ENCODE measurements at regions of chr3 and their contacts with region 1.

Region 1: DNA sequence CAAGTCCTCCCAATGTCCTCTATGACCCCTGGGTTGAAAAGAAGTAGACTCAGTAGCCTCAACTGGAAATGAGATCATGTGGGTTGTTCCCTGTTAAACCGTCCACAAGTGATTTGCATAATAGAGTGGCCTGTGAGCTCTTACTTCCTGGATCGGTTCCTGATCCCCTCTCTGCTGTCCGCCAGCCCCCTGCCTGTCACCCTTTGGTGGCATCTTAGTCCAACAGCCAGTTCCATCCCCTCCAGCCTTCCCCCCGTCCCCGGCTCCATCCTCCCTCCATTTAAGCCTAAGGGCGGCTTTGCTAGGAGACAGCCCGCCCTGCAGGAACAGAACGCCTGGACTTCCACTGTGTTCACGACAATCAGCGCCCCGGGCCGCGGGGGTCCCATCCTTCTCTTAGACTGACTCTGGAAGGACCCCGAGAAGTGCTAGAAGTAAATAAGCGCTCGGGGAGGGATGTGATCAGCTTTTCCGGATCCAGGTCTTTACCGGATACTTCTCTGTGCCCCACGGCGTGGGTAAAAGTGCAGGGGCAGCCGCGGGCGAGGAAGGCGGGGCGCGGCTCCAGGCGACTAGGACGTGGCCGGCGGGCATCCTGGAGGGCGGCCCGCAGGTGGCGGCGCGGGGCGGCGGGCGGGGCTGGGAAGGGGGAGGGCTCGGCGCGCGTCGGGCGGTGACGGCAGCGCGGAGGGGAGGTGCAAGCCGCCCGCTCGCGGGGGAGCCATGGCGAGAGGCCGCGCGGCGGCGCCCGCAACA is 51.2 kb upstream of the ULK4 start:
- DNase-seq: peak; percentile 77
- H3K4me3 Mint-ChIP-seq: peak overlapping the region; percentile 86
- H3K27ac Mint-ChIP-seq: peak overlapping the region; percentile 87
- H3K4me1 Mint-ChIP-seq: peaks cover 47% of the 10 kb centered on the region
- H3K27me3 Mint-ChIP-seq: no peaks in the 10 kb centered on the region

Region 2: GRCh38 chr3:40524568-40525285 is 1488.4 kb before region 1 on chr3 and contains the start of gene ZNF621:
- CTCF ChIA-PET with region 1: no interaction called
- intact Hi-C with region 1: loop called (anchors 10 kb)
- DNase-seq: peak; percentile 82
- H3K4me3 Mint-ChIP-seq: peak within 1 kb of the TSS; percentile 92
- H3K27ac Mint-ChIP-seq: peak within 1 kb of the TSS; percentile 85
- H3K4me1 Mint-ChIP-seq: peaks cover 11% of the 10 kb centered on the region
- H3K27me3 Mint-ChIP-seq: no peaks in the 10 kb centered on the region
- total RNA-seq, gene ZNF621: 16.4 to 17.7 TPM

Region 3: GRCh38 chr3:41608347-41608746 is 404.8 kb before region 1 on chr3:
- CTCF ChIA-PET with region 1: no interaction called
- intact Hi-C with region 1: loop called (anchors 2 kb)
- DNase-seq: no peak
- H3K4me3 Mint-ChIP-seq: no peak overlapping the region
- H3K27ac Mint-ChIP-seq: peak overlapping the region; percentile 52
- H3K4me1 Mint-ChIP-seq: peaks cover 12% of the 10 kb centered on the region
- H3K27me3 Mint-ChIP-seq: no peaks in the 10 kb centered on the region

Region 4: DNA sequence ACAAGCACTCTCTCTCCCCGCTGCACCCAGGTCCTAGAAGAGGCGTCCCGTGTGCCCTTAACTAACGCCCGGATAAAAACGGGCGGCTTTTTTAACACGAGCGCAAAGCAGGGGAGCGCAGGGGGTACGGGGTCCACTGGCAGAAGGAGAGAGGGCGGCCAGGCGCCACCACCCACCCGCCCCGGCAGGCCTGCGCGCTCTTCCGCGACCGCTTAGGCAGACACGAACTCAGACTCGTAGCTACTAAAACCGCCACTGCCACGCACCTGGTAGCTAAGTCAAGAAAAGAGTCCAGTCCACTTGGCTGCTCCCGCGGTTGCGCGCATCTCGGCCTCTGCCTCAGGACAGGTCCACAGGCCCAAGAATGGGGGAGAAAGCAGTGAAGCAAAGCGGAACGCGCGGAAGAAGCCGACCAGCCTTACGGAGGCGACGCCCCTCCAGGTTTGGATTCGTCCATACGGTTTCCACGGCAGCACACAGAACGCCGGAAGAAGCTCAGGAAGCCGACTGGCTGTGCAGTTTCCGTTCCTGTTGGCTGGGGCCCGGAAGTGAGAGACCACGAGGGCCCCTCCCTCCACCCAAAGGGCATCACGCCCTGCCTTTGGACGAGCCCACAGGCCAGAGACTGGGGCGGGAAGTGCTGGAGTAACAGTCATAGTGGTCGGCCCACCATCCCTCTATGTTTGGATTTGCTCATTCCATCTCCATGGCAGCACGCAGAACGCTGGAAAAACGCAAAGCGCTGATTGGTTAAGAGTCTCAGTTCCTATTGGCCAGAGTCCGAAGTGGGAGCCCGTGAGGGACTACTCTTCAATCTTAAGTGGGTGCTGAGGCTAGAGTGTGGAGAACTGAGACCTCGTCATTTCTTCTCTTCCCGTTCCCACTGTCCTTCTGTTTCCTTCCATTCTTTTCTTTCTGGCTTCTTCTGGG is 51.1 kb before region 1 on chr3 and contains the start of gene ULK4:
- CTCF ChIA-PET with region 1: no interaction called
- intact Hi-C with region 1: loop called (anchors 1 kb)
- DNase-seq: peak; percentile 97
- H3K4me3 Mint-ChIP-seq: peak within 1 kb of the TSS; percentile 99
- H3K27ac Mint-ChIP-seq: peak within 1 kb of the TSS; percentile 87
- H3K4me1 Mint-ChIP-seq: peaks cover 13% of the 10 kb centered on the region
- H3K27me3 Mint-ChIP-seq: no peaks in the 10 kb centered on the region
- total RNA-seq, gene ULK4: 8.5 to 9.1 TPM

Region 5: DNA sequence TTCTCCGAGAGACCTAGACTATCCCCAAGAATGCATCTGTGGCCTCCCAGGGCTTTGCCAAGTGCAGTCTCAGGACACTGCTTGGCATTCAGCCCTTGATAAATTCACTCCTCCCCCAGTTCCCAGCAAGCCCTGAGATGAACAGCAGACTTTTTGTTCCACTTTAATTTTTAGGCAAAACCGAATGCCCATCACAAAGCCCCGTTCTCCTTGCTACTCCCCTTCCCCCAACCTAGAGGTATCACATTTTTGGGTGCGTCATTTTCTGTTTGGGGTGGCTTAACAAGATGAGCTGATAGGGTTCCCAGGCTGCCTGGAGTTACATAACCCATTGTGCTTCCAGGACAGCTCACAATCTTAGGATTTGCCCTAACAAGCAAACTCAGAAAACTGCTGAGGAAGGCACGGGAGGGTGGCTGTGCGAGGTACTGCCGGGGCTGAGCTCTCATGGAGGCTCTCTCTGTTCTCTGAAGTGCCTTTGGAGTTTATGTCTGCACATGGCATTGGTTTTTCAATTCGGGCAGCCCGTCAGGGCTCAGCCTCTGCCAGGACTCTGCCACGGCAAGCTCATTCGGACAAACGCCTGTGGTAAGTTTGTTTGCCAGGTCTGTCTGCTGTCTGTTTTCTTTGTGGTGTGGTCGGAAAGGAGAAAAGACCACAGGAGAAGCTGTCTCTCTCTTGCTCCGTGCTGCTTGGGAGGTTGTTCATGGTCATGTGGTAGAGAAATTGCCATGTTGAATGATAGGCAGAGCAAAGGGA is 78.0 kb after region 1 on chr3 and contains the start of gene TRAK1:
- CTCF ChIA-PET with region 1: no interaction called
- intact Hi-C with region 1: loop called (anchors 1 kb)
- DNase-seq: no peak
- H3K4me3 Mint-ChIP-seq: no peak within 1 kb of the TSS
- H3K27ac Mint-ChIP-seq: no peak within 1 kb of the TSS
- H3K4me1 Mint-ChIP-seq: peaks cover 51% of the 10 kb centered on the region
- H3K27me3 Mint-ChIP-seq: no peaks in the 10 kb centered on the region
- total RNA-seq, gene TRAK1: 18.3 to 19.1 TPM

Region 6: DNA sequence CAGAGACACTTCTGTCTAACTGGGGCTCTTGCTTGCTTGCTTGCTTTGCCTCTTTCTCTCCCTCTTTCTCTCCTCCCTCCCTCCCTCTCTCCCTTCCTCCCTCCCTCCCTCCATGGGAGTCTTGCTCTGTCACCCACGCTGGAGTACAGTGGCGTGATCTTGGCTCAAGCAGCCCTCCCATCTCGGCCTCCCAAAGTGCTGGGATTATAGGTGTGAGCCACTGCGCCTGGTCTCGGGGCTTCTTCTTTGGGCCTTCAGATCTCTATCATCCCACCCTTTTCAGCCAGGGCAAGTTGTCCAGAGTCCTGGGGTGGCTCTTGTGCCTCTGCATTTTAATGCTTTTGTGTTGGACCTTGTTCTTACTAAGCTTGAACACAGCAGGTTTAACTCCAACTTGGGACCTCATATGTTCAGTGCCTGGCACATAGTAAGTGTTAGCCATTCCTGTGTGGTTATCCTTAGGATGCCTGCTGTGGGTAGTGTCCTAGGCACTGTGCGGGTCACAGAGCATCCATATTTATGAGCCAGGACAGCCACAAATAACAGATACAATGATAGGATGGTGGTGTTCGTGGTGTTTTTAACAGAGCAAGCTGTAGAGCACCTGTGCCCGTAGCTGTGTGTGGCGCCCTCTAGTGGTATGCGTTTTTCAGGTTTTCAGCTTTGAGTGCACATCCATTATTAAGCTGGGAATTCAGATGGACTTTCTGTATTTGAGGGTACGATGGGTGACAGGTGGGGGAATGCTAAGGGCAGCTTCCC is 177.8 kb after region 1 on chr3:
- CTCF ChIA-PET with region 1: no interaction called
- intact Hi-C with region 1: loop called (anchors 10 kb)
- DNase-seq: peak; percentile 83
- H3K4me3 Mint-ChIP-seq: no peak overlapping the region
- H3K27ac Mint-ChIP-seq: no peak overlapping the region
- H3K4me1 Mint-ChIP-seq: peaks cover 8% of the 10 kb centered on the region
- H3K27me3 Mint-ChIP-seq: no peaks in the 10 kb centered on the region

Region 7: DNA sequence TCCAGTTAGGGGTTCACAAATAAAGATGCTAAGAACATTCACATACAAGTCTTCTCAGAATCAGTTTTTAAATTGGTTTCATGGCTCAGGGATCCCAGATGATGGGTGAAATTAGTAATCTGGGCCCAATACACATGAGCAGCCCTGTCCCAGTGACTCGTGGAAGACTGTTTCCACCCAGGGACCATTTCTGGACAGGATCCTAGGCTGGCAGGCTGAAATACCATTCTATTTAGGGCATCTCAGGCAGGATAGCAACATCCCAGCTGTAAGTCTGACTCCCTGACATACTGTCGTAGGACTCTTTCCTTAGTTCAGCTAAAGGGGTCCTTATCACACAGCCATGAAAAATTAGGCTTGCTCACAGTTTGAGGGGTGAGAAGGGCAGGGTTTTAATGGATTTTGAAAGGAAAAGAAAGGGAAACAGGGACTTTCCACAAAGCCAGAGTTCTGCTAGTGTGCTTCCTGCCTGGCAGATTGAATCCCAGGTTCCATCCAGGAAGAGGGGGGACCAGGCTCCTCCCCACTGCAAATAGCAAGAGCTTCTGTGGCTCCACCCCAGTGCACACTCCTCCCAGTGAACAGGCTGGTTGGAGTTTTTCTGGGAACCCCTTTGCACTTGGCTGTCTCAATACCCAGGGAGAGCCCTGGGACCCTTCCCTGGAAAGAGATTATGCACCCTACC is 438.6 kb after region 1 on chr3:
- CTCF ChIA-PET with region 1: no interaction called
- intact Hi-C with region 1: no loop called
- DNase-seq: no peak
- H3K4me3 Mint-ChIP-seq: no peak overlapping the region
- H3K27ac Mint-ChIP-seq: no peak overlapping the region
- H3K4me1 Mint-ChIP-seq: no peaks in the 10 kb centered on the region
- H3K27me3 Mint-ChIP-seq: no peaks in the 10 kb centered on the region

Region 8: GRCh38 chr3:42600111-42600988 is 587.2 kb after region 1 on chr3 and contains the start of gene NKTR:
- CTCF ChIA-PET with region 1: no interaction called
- intact Hi-C with region 1: loop called (anchors 1 kb)
- DNase-seq: peak; percentile 99
- H3K4me3 Mint-ChIP-seq: peak within 1 kb of the TSS; percentile 96
- H3K27ac Mint-ChIP-seq: peak within 1 kb of the TSS; percentile 99
- H3K4me1 Mint-ChIP-seq: peaks cover 27% of the 10 kb centered on the region
- H3K27me3 Mint-ChIP-seq: no peaks in the 10 kb centered on the region
- total RNA-seq, gene NKTR: 62.1 to 65.9 TPM

Measured in activated naive CD4-positive, alpha-beta T cell treated with anti-CD3 and anti-CD28 coated beads for 36 hours (primary cell).